GM12878 (cell line): ENCODE measurements at regions of chr1 and their contacts with region 1.

Region 1: GRCh38 chr1:21573971-21574465 is 64.8 kb downstream of the ALPL start:
- DNase-seq: no peak
- ATAC-seq: peak; percentile 82
- H3K4me3 ChIP-seq: no peak overlapping the region
- H3K27ac ChIP-seq: no peak overlapping the region
- H3K4me1 ChIP-seq: no peaks in the 10 kb centered on the region
- H3K27me3 ChIP-seq: no peaks in the 10 kb centered on the region; a peak in 2 of 4 replicates
- CTCF ChIP-seq: peak; percentile 27 to 56 (median 33); a peak in 4 of 6 replicates
- EP300 ChIP-seq: no peak
- POLR2A ChIP-seq: no peak
- RAD21 ChIP-seq: peak; percentile 42

Region 2: GRCh38 chr1:21378705-21379494 is 195.1 kb before region 1 on chr1:
- CTCF ChIA-PET with region 1: no interaction called
- POLR2A ChIA-PET with region 1: no interaction called
- RAD21 ChIA-PET with region 1: no interaction called
- SMC1A ChIA-PET with region 1: no interaction called
- in situ Hi-C with region 1: no loop called
- intact Hi-C with region 1: loop called (anchors 10 kb)
- DNase-seq: no peak
- ATAC-seq: no peak
- H3K4me3 ChIP-seq: no peak overlapping the region
- H3K27ac ChIP-seq: no peak overlapping the region
- H3K4me1 ChIP-seq: 0 out of 2 replicates have a peak, but pooled peaks cover 2% of the 10 kb centered on the region
- H3K27me3 ChIP-seq: no peaks in the 10 kb centered on the region; a peak in 1 of 4 replicates
- CTCF ChIP-seq: no peak
- EP300 ChIP-seq: no peak
- POLR2A ChIP-seq: no peak
- RAD21 ChIP-seq: no peak